ENCODE measurements at regions of chr17 and their contacts with region 1.

Region 1: GRCh38 chr17:35119368-35120165 is at the start of gene RAD51D:
- DNase-seq: peak; percentile 75
- H3K4me3 Mint-ChIP-seq: peak within 1 kb of the TSS; percentile 94
- H3K27ac Mint-ChIP-seq: peak within 1 kb of the TSS; percentile 89
- H3K4me1 Mint-ChIP-seq: peaks cover 23% of the 10 kb centered on the region
- H3K27me3 Mint-ChIP-seq: peaks cover 1% of the 10 kb centered on the region
- total RNA-seq, gene RAD51D: 29.5 and 31.9 TPM in 2 replicates

Region 2: GRCh38 chr17:34420254-34420766 is 699.3 kb before region 1 on chr17:
- intact Hi-C with region 1: loop called (anchors 10 kb)
- DNase-seq: peak; percentile 38
- H3K4me3 Mint-ChIP-seq: no peak overlapping the region
- H3K27ac Mint-ChIP-seq: no peak overlapping the region
- H3K4me1 Mint-ChIP-seq: peaks cover 4% of the 10 kb centered on the region
- H3K27me3 Mint-ChIP-seq: peaks cover 45% of the 10 kb centered on the region

Region 3: DNA sequence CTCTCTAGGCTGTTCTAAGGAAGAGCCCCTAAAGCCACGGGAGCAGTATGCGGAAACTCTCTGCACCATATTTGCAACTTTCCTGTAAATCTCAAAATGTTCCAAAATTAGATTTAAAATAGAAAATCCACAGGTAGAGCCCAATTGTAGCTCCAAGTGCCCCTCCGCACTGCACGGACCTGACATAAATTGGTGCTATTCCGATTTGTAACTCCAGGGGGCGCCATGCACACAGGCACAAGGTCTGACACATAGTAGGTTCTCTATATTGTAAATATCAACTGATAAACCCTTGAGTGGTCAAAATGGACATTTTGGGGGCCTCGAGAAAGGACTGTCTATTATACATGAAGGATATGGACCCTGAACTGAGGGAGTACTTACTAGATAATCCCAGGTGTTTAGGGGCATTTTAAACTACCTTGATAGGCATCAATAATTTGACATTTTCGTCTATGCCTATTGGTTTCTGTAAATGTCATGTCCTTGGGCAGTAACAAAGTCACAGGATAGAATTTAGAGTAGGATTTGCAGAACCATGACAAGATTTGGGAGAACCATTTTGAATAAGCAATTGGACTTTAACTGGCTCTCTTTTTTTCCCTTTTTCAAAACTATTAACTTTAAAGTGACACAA is 576.7 kb before region 1 on chr17:
- intact Hi-C with region 1: loop called (anchors 2 kb)
- DNase-seq: peak; percentile 19
- H3K4me3 Mint-ChIP-seq: no peak overlapping the region
- H3K27ac Mint-ChIP-seq: no peak overlapping the region
- H3K4me1 Mint-ChIP-seq: no peaks in the 10 kb centered on the region
- H3K27me3 Mint-ChIP-seq: peaks cover 36% of the 10 kb centered on the region

Region 4: DNA sequence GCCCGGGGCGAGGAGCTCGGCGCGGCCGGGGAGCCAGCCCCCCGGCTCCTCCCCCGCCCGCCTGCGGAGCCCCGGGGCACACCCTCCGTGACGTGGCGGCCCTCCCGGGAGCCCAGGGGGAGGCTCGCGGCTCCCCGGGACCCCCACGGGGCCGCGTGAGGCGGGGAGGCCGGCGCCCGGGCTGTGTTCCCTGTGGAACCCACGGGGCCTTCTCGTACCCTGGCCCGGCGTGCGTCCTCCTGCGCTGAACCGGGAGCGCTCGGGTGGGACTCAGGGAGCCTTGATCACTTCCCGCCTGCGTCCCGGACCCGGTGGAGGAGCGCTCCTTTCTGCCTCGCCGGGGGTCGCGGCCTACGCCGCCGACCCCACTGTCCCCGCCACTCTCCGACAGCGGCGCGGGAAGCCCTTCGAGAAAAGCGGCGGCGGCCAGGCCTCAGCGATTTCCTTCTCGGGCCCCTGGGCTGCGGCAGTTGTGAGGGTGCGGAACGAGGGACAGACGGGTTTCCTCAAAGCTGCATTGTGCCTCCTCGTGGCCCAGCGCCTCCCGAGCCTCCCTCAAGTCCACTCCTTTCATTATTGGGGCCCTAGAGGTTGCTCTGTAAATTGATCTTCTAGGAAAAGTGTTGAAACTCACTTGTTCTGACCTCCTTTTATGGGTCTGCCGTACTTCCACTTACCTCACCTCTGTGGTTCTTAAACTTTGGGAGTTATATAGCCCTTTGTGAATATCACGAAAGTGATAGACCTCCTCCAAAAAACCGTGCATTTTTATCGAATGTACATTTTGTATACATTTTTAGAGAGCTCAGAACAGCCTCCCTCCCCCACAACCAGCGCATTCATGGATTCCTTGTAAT is 138.7 kb before region 1 on chr17:
- intact Hi-C with region 1: loop called (anchors 5 kb)
- DNase-seq: peak; percentile 74
- H3K4me3 Mint-ChIP-seq: peak overlapping the region; percentile 94
- H3K27ac Mint-ChIP-seq: peak overlapping the region; percentile 96
- H3K4me1 Mint-ChIP-seq: peaks cover 39% of the 10 kb centered on the region
- H3K27me3 Mint-ChIP-seq: no peaks in the 10 kb centered on the region

Region 5: DNA sequence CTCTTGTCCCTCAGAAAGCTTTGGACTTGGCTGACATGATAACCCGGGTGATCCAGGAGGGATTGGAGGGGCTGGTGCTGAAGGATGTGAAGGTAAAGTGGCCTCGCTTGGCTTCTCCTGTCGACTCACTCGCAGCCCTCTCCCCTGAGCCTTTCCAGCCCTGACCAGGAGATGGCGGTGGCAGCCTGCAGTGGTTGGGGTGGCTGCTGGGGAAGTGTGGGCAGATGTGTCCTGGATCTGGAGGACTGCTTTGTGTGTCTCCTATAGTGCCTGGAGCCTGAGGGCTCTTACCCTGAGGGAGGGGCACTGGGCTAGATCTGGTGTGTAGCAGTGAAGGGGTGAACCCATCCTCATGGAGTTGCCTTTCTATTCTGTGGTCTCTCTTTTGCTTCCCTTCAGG is 121.4 kb before region 1 on chr17:
- intact Hi-C with region 1: loop called (anchors 1 kb)
- DNase-seq: peak; percentile 70
- H3K4me3 Mint-ChIP-seq: no peak overlapping the region
- H3K27ac Mint-ChIP-seq: peak overlapping the region; percentile 57
- H3K4me1 Mint-ChIP-seq: peaks cover 6% of the 10 kb centered on the region
- H3K27me3 Mint-ChIP-seq: no peaks in the 10 kb centered on the region

Region 6: GRCh38 chr17:35094902-35095301 is 24.7 kb before region 1 on chr17:
- intact Hi-C with region 1: no loop called
- DNase-seq: no peak
- H3K4me3 Mint-ChIP-seq: no peak overlapping the region
- H3K27ac Mint-ChIP-seq: no peak overlapping the region
- H3K4me1 Mint-ChIP-seq: peaks cover 5% of the 10 kb centered on the region
- H3K27me3 Mint-ChIP-seq: no peaks in the 10 kb centered on the region

Region 7: DNA sequence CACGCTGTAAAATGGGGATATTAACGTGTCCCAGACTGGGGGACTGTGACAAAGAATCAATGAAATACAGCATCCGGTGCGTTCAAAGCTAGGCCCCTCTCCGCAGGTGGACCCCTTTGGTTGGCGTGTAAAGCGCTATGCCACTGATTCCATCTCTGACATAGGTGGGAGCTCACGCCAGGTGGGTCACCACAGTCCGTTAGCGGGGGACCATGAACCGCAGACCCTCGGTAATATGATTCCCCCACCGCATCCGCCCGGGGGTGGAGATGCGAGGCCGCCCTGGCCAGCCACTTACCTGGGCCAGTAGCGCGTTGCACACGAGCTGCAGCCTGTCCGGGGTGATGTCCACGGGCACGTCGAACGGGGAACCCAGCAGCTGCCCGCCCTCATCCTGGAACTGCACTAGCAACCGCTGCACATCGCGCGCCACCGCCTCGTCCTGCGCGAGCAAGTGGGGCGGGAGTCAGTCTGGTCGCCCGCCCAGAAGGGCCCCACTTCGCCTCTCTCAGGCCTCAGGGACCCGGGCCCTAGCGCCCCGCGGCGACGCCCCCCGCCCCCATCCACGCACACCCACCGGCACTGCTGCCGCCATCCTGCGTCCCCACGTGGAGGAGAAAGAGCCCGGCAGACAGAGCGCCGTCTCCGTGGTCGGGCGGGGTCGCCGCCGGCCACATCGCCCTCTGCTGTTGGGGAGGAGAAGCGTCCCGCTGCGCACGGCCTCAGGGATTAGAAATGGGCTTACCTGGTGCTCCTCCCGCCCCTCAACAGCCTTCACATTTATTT is 22.3 kb after region 1 on chr17 and contains the start of gene NLE1:
- intact Hi-C with region 1: no loop called
- DNase-seq: peak; percentile 86
- H3K4me3 Mint-ChIP-seq: peak within 1 kb of the TSS; percentile 82
- H3K27ac Mint-ChIP-seq: peak within 1 kb of the TSS; percentile 69
- H3K4me1 Mint-ChIP-seq: peaks cover 6% of the 10 kb centered on the region
- H3K27me3 Mint-ChIP-seq: no peaks in the 10 kb centered on the region
- total RNA-seq, gene NLE1: 38.8 and 40.6 TPM in 2 replicates

Measured in activated T-helper 2 cell treated with anti-CD3 and anti-CD28 coated beads, Interferon-gamma antibody, Interleukin-2, Interleukin-4, amounts not matched to agents 10 μg/mL and 5 μg/mL and 100 μg/mL, durations not matched to agents 14 hours and 24 hours and 36 hours (primary cell).